Activated T-helper 1 cell treated with anti-CD3 and anti-CD28 coated beads, Interleukin-12 subunit alpha, Interleukin-12 subunit beta, Interleukin-2, Interleukin-4 antibody, amounts not matched to agents 30 ng/mL and 10 ng/mL and 1 ng/mL, durations not matched to agents 14 hours and 24 hours and 36 hours (primary cell): ENCODE measurements at regions of chrX and their contacts with region 1.

Region 1: DNA sequence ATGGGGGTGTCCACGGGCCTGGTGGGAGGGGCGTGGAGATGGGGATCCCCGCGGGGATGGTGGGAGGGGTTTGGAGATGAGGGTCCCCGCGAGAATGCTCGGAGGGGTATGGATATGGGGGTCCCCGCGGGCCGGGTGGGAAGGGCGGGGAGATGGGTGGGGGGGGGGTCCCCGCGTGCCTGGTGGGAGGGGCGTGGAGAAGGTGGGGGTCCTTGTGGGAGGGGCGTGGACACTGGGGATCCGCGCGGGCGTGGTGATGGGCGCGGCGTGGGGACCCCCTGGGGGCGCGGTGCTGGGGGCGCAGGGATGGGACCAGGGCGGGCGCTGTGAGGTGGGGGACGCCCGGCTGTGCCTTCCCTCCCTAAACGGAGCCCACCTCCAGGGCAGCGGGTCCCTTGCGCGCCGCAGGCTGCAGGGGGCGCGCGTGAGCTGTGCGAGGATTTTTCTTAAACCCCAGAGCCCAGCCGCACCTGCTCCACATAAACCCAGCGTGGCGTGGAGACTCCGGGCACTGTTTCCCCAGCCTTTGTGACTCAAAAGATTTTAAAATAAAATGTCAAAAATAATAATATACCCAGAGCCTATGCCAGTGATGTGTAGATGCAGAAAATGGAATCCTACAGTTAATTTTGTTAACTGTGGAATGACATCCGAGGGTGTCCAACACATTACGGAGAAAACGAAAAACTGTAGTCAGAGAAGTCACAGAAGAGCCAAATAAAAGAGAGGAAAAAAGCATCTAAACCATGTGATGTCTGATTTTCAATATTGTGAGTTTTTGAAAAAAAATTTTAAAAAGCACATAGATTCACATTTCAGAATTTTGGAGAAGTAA is 1.5 kb upstream of the ASMTL start:
- DNase-seq: peak; percentile 82
- H3K4me3 Mint-ChIP-seq: peak overlapping the region; percentile 68
- H3K27ac Mint-ChIP-seq: peak overlapping the region; percentile 36
- H3K4me1 Mint-ChIP-seq: peaks cover 13% of the 10 kb centered on the region
- H3K27me3 Mint-ChIP-seq: no peaks in the 10 kb centered on the region

Region 2: GRCh38 chrX:1323315-1323714 is 130.9 kb before region 1 on chrX:
- intact Hi-C with region 1: loop called (anchors 5 kb)
- DNase-seq: peak; percentile 45
- H3K4me3 Mint-ChIP-seq: no peak overlapping the region
- H3K27ac Mint-ChIP-seq: peak overlapping the region; percentile 55
- H3K4me1 Mint-ChIP-seq: peaks cover 12% of the 10 kb centered on the region
- H3K27me3 Mint-ChIP-seq: peaks cover 5% of the 10 kb centered on the region

Region 3: DNA sequence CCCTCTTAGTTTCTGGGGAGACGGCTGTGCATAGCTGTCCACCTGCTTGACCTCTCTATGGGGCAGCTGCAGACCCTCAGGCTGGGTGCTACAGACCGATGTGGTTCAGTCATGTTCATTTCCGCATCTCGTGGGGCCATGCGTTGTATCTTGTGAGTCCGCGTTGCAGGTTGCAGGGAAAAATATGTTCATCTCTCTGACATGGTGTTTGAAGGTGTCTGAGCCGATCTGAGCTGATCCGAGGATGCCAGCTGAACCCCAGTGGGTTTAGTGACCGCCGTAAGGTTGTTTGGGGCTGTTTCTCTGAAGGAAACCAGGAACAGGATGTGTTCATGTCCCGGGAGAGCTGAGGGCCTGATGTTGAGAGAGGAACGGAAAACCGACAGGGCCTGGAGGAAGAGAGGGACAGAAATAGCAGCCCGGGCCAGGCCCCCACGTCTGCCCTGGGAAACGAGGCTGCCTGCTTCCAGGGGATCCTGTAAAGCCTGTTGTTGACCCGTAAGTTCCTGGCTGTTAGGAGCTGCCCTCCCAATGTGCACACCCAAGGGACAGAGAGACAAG is 92.6 kb after region 1 on chrX:
- intact Hi-C with region 1: no loop called
- DNase-seq: no peak
- H3K4me3 Mint-ChIP-seq: no peak overlapping the region
- H3K27ac Mint-ChIP-seq: no peak overlapping the region
- H3K4me1 Mint-ChIP-seq: peaks cover 13% of the 10 kb centered on the region
- H3K27me3 Mint-ChIP-seq: peaks cover 2% of the 10 kb centered on the region

Region 4: GRCh38 chrX:1580735-1581531 is 126.8 kb after region 1 on chrX:
- intact Hi-C with region 1: loop called (anchors 1 kb)
- DNase-seq: peak; percentile 66
- H3K4me3 Mint-ChIP-seq: no peak overlapping the region
- H3K27ac Mint-ChIP-seq: no peak overlapping the region
- H3K4me1 Mint-ChIP-seq: peaks cover 19% of the 10 kb centered on the region
- H3K27me3 Mint-ChIP-seq: no peaks in the 10 kb centered on the region

Region 5: GRCh38 chrX:2500267-2501075 is 1046.3 kb after region 1 on chrX and contains the starts of genes DHRSX and ZBED1:
- intact Hi-C with region 1: loop called (anchors 5 kb)
- DNase-seq: peak; percentile 53
- H3K4me3 Mint-ChIP-seq: peak within 1 kb of the TSS; percentile 88
- H3K27ac Mint-ChIP-seq: peak within 1 kb of the TSS; percentile 80
- H3K4me1 Mint-ChIP-seq: peaks cover 27% of the 10 kb centered on the region
- H3K27me3 Mint-ChIP-seq: peaks cover 2% of the 10 kb centered on the region
- total RNA-seq, gene DHRSX: 26.3 and 27.4 TPM in 2 replicates
- total RNA-seq, gene ZBED1: 39.8 and 41.6 TPM in 2 replicates

Region 6: GRCh38 chrX:2696698-2697215 is 1242.6 kb after region 1 on chrX:
- intact Hi-C with region 1: loop called (anchors 1 kb)
- DNase-seq: peak; percentile 63
- H3K4me3 Mint-ChIP-seq: peak overlapping the region; percentile 99
- H3K27ac Mint-ChIP-seq: peak overlapping the region; percentile 99
- H3K4me1 Mint-ChIP-seq: peaks cover 86% of the 10 kb centered on the region
- H3K27me3 Mint-ChIP-seq: no peaks in the 10 kb centered on the region